ENCODE measurements at regions of chr20 and their contacts with region 1.

Region 1: DNA sequence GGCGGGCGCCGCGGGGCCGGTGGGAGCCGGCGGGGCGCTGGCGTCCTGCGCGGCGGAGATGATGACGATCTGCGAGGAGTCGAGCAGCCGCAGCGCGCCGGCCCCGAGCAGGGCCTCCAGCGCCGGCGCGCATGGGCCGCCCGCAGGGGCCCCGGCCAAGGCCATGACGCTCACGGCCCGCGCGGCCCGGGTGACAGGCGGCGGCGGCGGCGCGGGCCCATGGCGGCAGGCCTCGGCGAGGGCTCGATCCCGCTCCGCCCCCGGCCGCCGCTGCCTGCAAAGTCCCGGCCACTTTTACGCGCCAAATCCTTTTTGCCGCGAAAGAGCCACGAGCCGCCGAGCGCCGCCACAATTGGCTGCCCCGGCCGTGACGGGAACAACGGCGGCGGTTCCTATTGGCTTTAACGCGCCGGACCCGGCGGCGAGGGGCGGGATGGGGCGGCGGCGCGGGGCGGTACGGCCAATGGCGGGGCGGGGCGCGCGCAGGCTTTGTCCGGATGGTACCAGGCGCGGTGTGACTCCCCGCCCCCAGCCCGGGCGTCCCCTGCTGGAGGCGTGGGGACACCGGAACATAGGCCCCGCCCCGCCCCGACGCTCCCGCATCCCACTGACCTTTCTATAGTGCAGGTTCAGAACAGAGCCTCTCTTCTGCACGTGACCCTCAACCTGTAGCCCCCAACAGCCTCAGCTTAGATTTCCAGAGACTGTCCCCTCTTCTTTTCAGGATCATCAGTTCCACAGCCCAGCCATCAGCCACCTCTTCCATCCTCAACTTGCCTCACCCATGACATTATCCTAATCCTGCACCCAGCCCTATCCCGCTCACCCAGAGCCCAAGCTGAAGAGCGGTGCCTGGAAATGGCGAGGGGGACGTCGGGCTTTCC is at the start of gene E2F1:
- DNase-seq: peak; percentile 94
- ATAC-seq: peak; percentile 91
- H3K4me3 ChIP-seq: peak within 1 kb of the TSS; percentile 58 to 82 (median 65)
- H3K27ac ChIP-seq: peak within 1 kb of the TSS; percentile 56
- H3K4me1 ChIP-seq: peaks cover 63% of the 10 kb centered on the region
- H3K27me3 ChIP-seq: no peaks in the 10 kb centered on the region
- CTCF ChIP-seq: peak; percentile 82
- EP300 ChIP-seq: no peak
- POLR2A ChIP-seq: peak; percentile 42 to 51; a peak in 1 of 4 replicates
- RAD21 ChIP-seq: peak; percentile 5
- total RNA-seq, gene E2F1: 25.3 and 39.4 TPM in 2 replicates

Region 2: GRCh38 chr20:33674295-33675135 is 11.8 kb before region 1 on chr20 and contains the start of gene NECAB3:
- CTCF ChIA-PET with region 1: no interaction called
- POLR2A ChIA-PET with region 1: interaction called, 14 read pairs
- in situ Hi-C with region 1: no loop called
- intact Hi-C with region 1: loop called (anchors 1 kb)
- DNase-seq: peak; percentile 82
- ATAC-seq: peak; percentile 81
- H3K4me3 ChIP-seq: peak within 1 kb of the TSS; percentile 81 to 96 (median 96)
- H3K27ac ChIP-seq: peak within 1 kb of the TSS; percentile 81
- H3K4me1 ChIP-seq: peaks cover 51% of the 10 kb centered on the region
- H3K27me3 ChIP-seq: peaks cover 0 to 3% of the 10 kb centered on the region in 2 experiments; a peak in 1 of 5 replicates
- CTCF ChIP-seq: peak; percentile 57
- EP300 ChIP-seq: 0 out of 4 replicates have a peak, but pooled peaks of 1 of the 2 experiments have one; percentile 18
- POLR2A ChIP-seq: peak; percentile 68 to 92
- RAD21 ChIP-seq: peak; percentile 80
- total RNA-seq, gene NECAB3: 26.4 and 61.5 TPM in 2 replicates

Region 3: DNA sequence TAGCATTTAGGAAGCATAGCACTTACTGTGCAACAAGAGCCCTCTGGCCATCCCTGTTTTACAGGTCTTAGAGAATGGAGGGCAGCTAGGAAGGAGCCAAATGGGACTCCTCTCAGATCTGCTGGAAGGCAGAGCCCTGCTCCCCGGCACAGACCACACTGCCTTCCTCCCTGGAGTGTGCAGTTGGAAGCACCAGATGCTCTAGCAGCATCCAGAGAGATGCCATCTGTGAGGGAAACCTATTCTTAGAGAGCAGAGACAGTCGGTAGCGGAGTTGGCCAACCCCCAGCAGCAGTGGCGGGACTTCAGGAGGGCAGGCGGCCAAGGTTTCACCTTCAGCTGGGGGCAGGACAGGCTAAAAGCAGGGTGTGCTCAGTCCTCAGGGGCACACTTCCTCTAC is 16.5 kb after region 1 on chr20:
- CTCF ChIA-PET with region 1: no interaction called
- POLR2A ChIA-PET with region 1: no interaction called
- in situ Hi-C with region 1: no loop called
- intact Hi-C with region 1: loop called (anchors 2 kb)
- DNase-seq: no peak
- ATAC-seq: peak; percentile 42
- H3K4me3 ChIP-seq: no peak overlapping the region
- H3K27ac ChIP-seq: no peak overlapping the region
- H3K4me1 ChIP-seq: peaks cover 46% of the 10 kb centered on the region
- H3K27me3 ChIP-seq: no peaks in the 10 kb centered on the region
- CTCF ChIP-seq: no peak
- EP300 ChIP-seq: no peak
- POLR2A ChIP-seq: no peak
- RAD21 ChIP-seq: no peak

Region 4: DNA sequence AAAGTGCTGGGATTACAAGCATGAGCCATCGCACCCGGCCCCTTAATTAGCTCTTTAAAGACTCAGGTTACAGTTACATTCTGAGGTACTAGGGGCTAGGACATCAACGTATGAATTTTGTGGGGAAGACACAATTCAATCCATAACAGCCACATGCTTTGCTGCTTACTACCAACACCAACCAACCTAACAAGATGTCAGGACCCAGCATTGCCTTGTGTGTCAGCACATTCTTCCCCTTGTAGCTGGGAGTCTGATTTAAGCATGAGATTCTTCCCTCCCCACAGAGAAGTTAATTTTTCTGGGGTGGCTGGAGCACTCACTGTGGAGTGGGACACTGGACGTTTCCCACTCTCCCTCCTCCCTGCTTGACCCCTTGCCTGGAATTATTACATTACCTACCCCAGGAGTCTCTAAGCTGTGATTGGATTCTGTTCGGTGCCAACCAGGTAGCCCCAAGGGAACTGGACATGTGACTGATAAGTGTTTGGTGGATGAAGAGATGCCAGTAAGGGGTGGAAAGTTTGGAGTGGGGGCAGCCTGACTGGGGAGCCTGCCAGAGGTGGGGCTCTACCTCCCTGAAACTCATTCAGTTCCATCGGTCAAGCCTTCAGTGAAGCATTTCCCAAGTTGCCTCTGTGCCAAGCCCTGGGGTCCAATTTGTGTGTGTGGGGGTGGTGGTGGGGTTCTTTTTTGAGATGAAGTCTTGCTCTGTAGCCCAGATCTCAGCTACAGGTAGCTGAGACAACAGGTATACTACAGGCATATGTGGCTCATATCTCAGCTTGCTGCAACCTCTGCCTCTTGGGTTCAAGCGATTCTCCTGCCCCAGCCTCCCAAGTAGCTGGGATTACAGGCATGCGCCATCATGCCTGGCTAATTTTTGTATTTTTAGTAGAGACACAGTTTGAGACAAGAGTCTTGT is 39.6 kb after region 1 on chr20:
- CTCF ChIA-PET with region 1: no interaction called
- POLR2A ChIA-PET with region 1: no interaction called
- in situ Hi-C with region 1: no loop called
- intact Hi-C with region 1: loop called (anchors 2 kb)
- DNase-seq: no peak
- ATAC-seq: no peak
- H3K4me3 ChIP-seq: no peak overlapping the region
- H3K27ac ChIP-seq: no peak overlapping the region
- H3K4me1 ChIP-seq: peaks cover 61% of the 10 kb centered on the region
- H3K27me3 ChIP-seq: no peaks in the 10 kb centered on the region
- CTCF ChIP-seq: no peak
- EP300 ChIP-seq: no peak
- POLR2A ChIP-seq: no peak
- RAD21 ChIP-seq: no peak

Region 5: GRCh38 chr20:34165018-34165619 is 478.8 kb after region 1 on chr20:
- CTCF ChIA-PET with region 1: no interaction called
- POLR2A ChIA-PET with region 1: no interaction called
- in situ Hi-C with region 1: no loop called
- intact Hi-C with region 1: no loop called
- DNase-seq: no peak
- ATAC-seq: no peak
- H3K4me3 ChIP-seq: no peak overlapping the region
- H3K27ac ChIP-seq: no peak overlapping the region
- H3K4me1 ChIP-seq: peaks cover 3% of the 10 kb centered on the region
- H3K27me3 ChIP-seq: 0 out of 5 replicates have a peak, but pooled peaks cover 0 to 3% of the 10 kb centered on the region in 2 experiments
- CTCF ChIP-seq: no peak
- EP300 ChIP-seq: no peak
- POLR2A ChIP-seq: no peak
- RAD21 ChIP-seq: no peak

Region 6: DNA sequence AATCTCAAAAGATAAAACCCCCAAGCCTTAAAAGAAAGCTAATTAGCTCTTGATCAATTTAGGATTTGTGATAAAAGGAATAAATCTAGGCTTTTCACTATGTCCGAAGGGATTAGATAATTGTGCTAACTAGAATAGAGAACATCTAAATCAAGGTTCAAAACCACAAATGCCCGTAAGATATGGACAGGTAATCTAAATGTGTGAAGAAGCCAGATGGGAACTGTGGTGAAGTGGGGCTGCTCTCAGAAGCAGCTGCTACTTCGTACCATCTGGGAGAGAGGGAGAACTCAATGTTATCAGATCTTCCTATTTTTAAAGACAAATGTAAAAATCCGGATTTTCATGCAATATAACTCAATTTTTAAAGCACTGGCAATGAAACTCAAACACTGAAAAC is 1094.9 kb after region 1 on chr20:
- CTCF ChIA-PET with region 1: no interaction called
- POLR2A ChIA-PET with region 1: no interaction called
- in situ Hi-C with region 1: no loop called
- intact Hi-C with region 1: no loop called
- DNase-seq: no peak
- ATAC-seq: no peak
- H3K4me3 ChIP-seq: no peak overlapping the region
- H3K27ac ChIP-seq: no peak overlapping the region
- H3K4me1 ChIP-seq: no peaks in the 10 kb centered on the region
- H3K27me3 ChIP-seq: no peaks in the 10 kb centered on the region
- CTCF ChIP-seq: no peak
- EP300 ChIP-seq: no peak
- POLR2A ChIP-seq: no peak
- RAD21 ChIP-seq: no peak

Measured in HepG2 (cell line).